Calu3 (cell line): ENCODE measurements at regions of chr4 and their contacts with region 1.

Region 1: GRCh38 chr4:130896920-130897319 is 1801.0 kb downstream of the C4orf33 start:
- DNase-seq: no peak
- H3K4me3 Mint-ChIP-seq: no peak overlapping the region
- H3K27ac Mint-ChIP-seq: no peak overlapping the region
- H3K4me1 Mint-ChIP-seq: no peaks in the 10 kb centered on the region
- H3K27me3 Mint-ChIP-seq: no peaks in the 10 kb centered on the region
- CTCF ChIP-seq: no peak

Region 2: DNA sequence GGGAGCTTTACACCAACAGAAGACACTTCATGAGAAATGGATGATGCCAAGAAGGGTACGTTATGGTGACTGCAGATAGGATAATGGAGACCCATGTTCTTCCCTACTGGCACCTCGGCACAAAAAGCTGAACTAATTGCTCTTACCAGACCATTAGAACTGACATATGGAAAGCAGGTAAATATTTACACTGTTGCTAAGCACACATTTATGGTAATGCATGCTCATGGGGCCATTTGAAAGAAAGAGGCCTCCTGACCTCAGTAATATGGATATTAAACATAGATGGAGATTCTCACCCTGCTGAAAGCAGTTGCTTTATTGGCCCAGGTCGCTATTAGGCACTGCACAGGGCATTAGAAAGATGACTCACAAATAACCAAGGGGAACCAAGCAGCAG is 41.4 kb before region 1 on chr4:
- CTCF ChIA-PET with region 1: no interaction called
- intact Hi-C with region 1: loop called (anchors 5 kb)
- DNase-seq: no peak
- H3K4me3 Mint-ChIP-seq: no peak overlapping the region
- H3K27ac Mint-ChIP-seq: no peak overlapping the region
- H3K4me1 Mint-ChIP-seq: no peaks in the 10 kb centered on the region
- H3K27me3 Mint-ChIP-seq: no peaks in the 10 kb centered on the region
- CTCF ChIP-seq: no peak